A549 (cell line): ENCODE measurements at regions of chr20 and their contacts with region 1.

Region 1: GRCh38 chr20:740141-740540 is 28.2 kb downstream of the SLC52A3 start:
- DNase-seq: no peak
- ATAC-seq: no peak
- H3K4me3 ChIP-seq: no peak overlapping the region
- H3K27ac ChIP-seq: no peak overlapping the region
- H3K4me1 ChIP-seq: no peaks in the 10 kb centered on the region
- CTCF ChIP-seq: no peak
- EP300 ChIP-seq: no peak
- POLR2A ChIP-seq: no peak
- RAD21 ChIP-seq: no peak

Region 2: GRCh38 chr20:549722-550496 is 190.2 kb before region 1 on chr20:
- CTCF ChIA-PET with region 1: interaction called, 22 read pairs
- POLR2A ChIA-PET with region 1: no interaction called
- DNase-seq: no peak
- ATAC-seq: no peak; a peak in 1 of 6 replicates
- H3K4me3 ChIP-seq: no peak overlapping the region
- H3K27ac ChIP-seq: no peak overlapping the region
- H3K4me1 ChIP-seq: peaks cover 8% of the 10 kb centered on the region; the same call in 2 of the 3 replicates
- CTCF ChIP-seq: no peak
- EP300 ChIP-seq: no peak
- POLR2A ChIP-seq: no peak
- RAD21 ChIP-seq: no peak

Region 3: GRCh38 chr20:645318-646106 is 94.6 kb before region 1 on chr20:
- CTCF ChIA-PET with region 1: interaction called, 25 read pairs
- POLR2A ChIA-PET with region 1: no interaction called
- DNase-seq: peak; percentile 87 to 91
- ATAC-seq: peak; percentile 57 to 79
- H3K4me3 ChIP-seq: no peak overlapping the region
- H3K27ac ChIP-seq: peak overlapping the region in 1 of 2 experiments; percentile 50; a peak in 2 of 6 replicates
- H3K4me1 ChIP-seq: peaks cover 25% of the 10 kb centered on the region
- CTCF ChIP-seq: peak; percentile 97
- EP300 ChIP-seq: no peak
- POLR2A ChIP-seq: no peak
- RAD21 ChIP-seq: peak; percentile 73 to 78

Region 4: GRCh38 chr20:709423-709822 is 30.7 kb before region 1 on chr20:
- CTCF ChIA-PET with region 1: interaction called, 19 read pairs
- POLR2A ChIA-PET with region 1: no interaction called
- DNase-seq: no peak
- ATAC-seq: no peak
- H3K4me3 ChIP-seq: no peak overlapping the region
- H3K27ac ChIP-seq: no peak overlapping the region
- H3K4me1 ChIP-seq: no peaks in the 10 kb centered on the region
- CTCF ChIP-seq: no peak
- EP300 ChIP-seq: no peak
- POLR2A ChIP-seq: no peak
- RAD21 ChIP-seq: no peak

Region 5: GRCh38 chr20:728248-728944 is 11.7 kb before region 1 on chr20:
- CTCF ChIA-PET with region 1: interaction called, 24 read pairs
- POLR2A ChIA-PET with region 1: no interaction called
- DNase-seq: peak; percentile 80 to 84
- ATAC-seq: peak; percentile 91 to 97
- H3K4me3 ChIP-seq: peak overlapping the region; percentile 66
- H3K27ac ChIP-seq: peak overlapping the region; percentile 75 to 90
- H3K4me1 ChIP-seq: 0 out of 3 replicates have a peak, but pooled peaks cover 3% of the 10 kb centered on the region
- CTCF ChIP-seq: peak; percentile 89
- EP300 ChIP-seq: no peak
- POLR2A ChIP-seq: no peak
- RAD21 ChIP-seq: peak; percentile 87 to 89

Region 6: DNA sequence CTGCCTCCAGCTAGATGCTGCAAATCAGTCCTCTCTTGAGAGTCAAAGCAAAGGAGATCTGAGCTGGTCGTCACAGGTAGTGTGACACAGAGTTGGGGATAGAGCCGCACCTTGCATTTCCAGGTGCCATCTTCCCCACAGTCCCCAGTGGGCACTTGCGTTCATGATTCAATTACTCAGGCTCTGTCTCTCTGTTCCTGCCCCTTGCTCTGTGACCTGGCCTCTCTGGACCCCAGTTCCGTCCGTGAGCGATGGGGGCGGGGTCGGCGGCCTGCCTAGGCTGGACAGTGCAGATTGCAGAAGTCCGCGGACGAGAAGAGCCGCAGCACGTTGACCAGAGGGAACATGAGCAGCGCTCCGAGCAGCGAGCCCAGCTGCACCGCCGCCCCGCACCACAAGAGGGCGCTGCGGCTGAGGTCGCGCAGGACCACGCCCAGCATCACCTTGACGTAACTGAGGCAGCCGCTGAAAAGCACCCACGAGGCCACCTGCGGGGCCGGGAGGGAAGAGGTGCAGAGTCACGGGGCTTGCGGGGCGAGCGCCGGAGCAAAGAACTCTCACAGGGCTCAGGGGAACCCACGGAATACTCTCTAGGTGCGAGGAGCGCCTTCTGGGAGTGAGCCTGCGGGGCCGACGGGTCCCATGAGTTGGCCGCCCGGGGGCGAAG is 20.7 kb after region 1 on chr20:
- CTCF ChIA-PET with region 1: interaction called, 26 read pairs
- POLR2A ChIA-PET with region 1: no interaction called
- DNase-seq: peak; percentile 47 to 65
- ATAC-seq: peak; percentile 40 to 91; a peak in 3 of 6 replicates
- H3K4me3 ChIP-seq: no peak overlapping the region
- H3K27ac ChIP-seq: no peak overlapping the region
- H3K4me1 ChIP-seq: no peaks in the 10 kb centered on the region
- CTCF ChIP-seq: peak; percentile 64
- EP300 ChIP-seq: no peak
- POLR2A ChIP-seq: no peak
- RAD21 ChIP-seq: 0 out of 5 replicates have a peak, but pooled peaks of 1 of the 2 experiments have one; percentile 15

Region 7: DNA sequence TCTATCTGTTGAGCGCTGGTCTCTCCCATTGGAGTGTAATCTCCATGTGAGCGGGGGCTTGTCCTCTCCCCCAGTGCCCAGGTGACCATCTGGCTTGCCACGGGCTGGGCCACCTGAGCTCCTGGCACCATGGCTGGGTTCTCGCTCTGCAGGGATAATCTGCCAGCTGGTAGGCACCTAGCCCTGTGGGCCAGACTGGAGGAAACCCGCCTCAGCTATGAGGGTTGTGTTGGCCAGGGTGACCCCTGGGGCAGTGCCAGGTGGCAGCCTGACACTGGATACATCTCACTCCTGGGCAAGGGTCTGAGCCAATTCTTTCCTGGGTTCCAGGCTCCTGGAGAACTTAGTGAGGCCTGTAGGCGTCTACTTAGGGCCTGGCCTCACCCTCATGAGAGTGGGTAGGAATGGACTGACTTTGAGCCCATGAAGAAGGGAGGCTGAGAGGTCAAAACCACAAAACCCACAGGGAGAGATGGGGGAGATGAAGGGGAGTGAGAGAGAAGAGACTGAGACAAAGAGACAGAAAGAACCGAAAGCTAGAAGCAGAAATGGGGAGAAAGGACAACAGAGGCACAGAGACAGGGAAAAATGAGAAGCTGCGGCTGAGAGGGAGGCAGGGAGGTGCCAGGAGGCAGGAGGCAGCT is 34.0 kb after region 1 on chr20:
- CTCF ChIA-PET with region 1: interaction called, 11 read pairs
- POLR2A ChIA-PET with region 1: no interaction called
- DNase-seq: no peak
- ATAC-seq: no peak; a peak in 1 of 6 replicates
- H3K4me3 ChIP-seq: no peak overlapping the region
- H3K27ac ChIP-seq: no peak overlapping the region
- H3K4me1 ChIP-seq: 0 out of 3 replicates have a peak, but pooled peaks cover 5% of the 10 kb centered on the region
- CTCF ChIP-seq: no peak
- EP300 ChIP-seq: no peak
- POLR2A ChIP-seq: no peak
- RAD21 ChIP-seq: no peak

Region 8: DNA sequence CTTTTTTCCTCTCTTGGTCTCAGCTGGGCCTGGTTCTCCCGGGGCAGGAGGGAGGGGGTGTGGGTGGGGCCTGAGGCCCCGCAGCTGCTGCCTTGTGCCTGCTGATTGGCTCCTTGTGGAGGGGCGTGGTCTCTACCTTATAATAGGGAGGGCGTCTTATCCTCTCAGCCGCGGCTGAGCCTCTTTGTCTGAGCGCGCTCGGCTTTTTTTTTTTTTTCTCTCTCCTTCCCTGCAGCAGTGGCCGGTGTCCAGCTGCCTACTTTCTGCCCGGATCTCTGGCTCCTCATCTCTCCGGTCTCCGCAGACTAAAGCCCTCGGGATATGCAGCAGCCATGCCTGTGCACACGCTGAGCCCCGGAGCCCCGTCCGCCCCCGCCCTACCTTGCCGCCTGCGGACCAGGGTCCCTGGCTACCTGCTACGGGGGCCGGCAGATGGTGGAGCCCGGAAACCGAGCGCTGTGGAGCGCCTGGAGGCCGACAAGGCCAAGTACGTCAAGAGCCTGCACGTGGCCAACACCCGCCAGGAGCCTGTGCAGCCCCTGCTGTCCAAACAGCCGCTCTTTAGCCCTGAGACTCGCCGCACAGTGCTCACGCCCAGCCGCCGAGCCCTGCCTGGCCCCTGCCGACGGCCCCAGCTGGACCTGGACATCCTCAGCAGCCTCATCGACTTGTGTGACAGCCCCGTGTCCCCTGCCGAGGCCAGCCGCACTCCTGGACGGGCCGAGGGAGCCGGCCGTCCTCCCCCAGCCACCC is 104.5 kb after region 1 on chr20:
- CTCF ChIA-PET with region 1: no interaction called
- POLR2A ChIA-PET with region 1: no interaction called
- DNase-seq: peak; percentile 70 to 73
- ATAC-seq: peak; percentile 50 to 93; a peak in 4 of 6 replicates
- H3K4me3 ChIP-seq: no peak overlapping the region
- H3K27ac ChIP-seq: no peak overlapping the region
- H3K4me1 ChIP-seq: peaks cover 5% of the 10 kb centered on the region; the same call in 1 of the 3 replicates
- CTCF ChIP-seq: no peak
- EP300 ChIP-seq: no peak
- POLR2A ChIP-seq: no peak
- RAD21 ChIP-seq: no peak

Region 9: DNA sequence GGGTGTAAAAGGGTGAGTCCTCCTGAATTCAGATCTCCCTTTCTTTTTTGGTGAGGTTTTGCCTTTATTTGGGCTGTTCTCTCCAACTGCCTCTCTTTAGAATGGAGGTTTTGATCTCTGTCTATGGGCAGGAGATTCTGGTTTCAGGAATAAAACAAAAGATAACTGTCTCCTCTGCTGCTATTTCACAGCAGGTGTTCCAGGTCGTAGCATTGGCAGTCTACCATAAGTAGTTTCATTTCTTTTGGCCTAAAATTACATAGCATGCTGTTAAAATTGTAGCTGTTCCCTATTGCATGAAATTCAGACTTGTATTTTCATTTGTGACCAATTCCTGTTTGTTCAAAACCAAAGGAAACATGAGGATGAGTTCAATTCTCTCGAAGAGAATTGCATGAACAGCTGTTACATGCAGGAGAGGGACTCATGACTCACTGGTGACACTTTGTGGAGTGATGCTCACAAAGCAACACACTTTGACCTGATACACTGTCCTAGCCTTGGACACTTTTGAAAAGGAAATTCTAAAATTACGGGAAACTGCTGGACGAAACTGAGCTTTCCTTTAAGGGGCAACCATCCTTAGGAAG is 994.2 kb after region 1 on chr20:
- CTCF ChIA-PET with region 1: no interaction called
- POLR2A ChIA-PET with region 1: no interaction called
- DNase-seq: peak in 1 of 2 experiments; percentile 35
- ATAC-seq: peak; percentile 67 to 70; a peak in 4 of 6 replicates
- H3K4me3 ChIP-seq: no peak overlapping the region
- H3K27ac ChIP-seq: no peak overlapping the region
- H3K4me1 ChIP-seq: no peaks in the 10 kb centered on the region
- CTCF ChIP-seq: peak; percentile 32; the same call in 2 of the 3 replicates
- EP300 ChIP-seq: no peak
- POLR2A ChIP-seq: no peak
- RAD21 ChIP-seq: peak; percentile 44 to 56; a peak in 4 of 5 replicates